ENCODE measurements at regions of chr1 and their contacts with region 1.

Region 1: DNA sequence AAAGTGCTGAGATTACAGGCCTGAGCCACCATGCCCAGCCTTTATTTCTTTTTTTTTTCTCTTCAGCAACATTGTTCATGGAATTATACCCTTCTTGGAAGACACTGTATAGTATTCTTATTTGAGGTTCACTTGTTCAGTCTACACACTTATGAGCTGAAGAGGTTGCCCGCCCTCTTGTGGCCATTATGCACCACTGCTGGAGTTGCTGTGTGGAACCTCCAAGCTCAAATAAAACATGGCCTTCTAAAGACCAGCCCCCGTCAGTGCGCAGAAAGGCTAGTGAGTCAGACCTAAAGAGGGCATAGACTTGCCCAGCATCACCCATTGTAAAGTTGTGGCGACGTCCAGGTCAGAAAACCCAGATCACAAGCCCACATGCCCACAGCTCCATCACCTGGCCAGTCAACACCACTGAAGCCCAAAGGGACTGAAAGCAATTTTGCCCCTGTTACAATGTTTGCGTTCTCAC is 20.4 kb downstream of the LURAP1 start:
- DNase-seq: peak; percentile 69
- H3K4me3 ChIP-seq: no peak overlapping the region
- CTCF ChIP-seq: peak; percentile 87

Region 2: GRCh38 chr1:46132529-46133180 is 90.9 kb before region 1 on chr1 and contains the start of gene PIK3R3:
- CTCF ChIA-PET with region 1: interaction called, 10 read pairs
- POLR2A ChIA-PET with region 1: interaction called, 3 read pairs
- DNase-seq: peak; percentile 93
- H3K4me3 ChIP-seq: peak within 1 kb of the TSS; percentile 83
- CTCF ChIP-seq: no peak

Region 3: DNA sequence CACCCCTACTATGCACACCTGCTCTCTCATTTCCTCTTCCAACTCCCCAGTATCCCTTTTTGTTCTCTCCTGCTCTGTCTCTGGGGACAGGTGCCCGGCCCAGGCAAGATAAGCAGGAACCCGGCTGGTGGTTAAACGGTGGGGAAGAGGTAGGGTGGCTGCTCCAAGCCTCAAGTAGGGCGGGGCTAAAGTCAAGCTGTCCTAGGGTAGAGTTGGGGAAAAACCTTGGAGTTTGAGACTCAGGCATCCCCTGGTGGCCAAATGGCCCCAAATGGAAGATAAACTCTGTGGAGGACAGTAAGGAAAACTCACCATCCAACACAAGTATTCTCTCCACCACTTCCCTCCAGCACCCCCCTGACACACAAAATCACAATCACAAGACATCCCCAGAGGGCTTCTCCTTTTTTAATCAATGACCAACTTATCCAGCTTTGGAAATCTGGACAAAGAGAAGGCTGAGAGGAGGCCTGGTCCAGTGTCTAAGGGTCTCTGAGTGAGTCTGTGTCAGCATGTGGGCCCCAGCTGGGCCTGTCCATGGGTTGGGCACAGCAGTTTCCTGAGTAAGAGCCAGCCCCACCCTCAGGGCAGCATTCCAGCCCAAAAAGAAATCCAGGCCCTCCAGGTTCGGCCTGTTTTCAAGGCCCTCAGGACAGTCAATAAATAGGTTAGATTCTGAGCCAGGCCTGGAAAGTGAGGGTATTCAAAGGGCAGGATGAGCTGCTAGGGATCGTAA is 35.0 kb before region 1 on chr1:
- CTCF ChIA-PET with region 1: interaction called, 100 read pairs
- POLR2A ChIA-PET with region 1: no interaction called
- DNase-seq: no peak
- H3K4me3 ChIP-seq: no peak overlapping the region
- CTCF ChIP-seq: no peak

Region 4: DNA sequence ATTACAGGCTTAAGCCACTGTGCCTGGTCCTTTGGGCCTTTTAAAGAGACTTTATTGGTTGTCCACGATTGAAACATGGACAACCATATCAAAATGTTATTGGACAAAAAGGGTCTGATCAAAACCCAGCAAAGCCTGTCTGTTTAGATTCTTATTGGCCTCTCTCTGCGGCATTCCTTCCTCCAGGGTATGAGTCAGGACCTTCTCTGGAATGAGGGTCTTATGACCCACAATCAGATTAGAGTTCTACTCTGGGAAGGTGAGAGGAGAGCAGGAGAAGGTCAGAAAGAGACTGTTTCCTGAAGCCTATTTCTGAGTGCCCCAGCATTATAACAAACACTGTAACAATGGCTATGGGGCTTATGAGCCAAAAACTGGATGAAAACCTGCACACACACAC is 12.5 kb before region 1 on chr1:
- CTCF ChIA-PET with region 1: interaction called, 102 read pairs
- POLR2A ChIA-PET with region 1: interaction called, 3 read pairs
- DNase-seq: no peak
- H3K4me3 ChIP-seq: no peak overlapping the region
- CTCF ChIP-seq: no peak

Region 5: GRCh38 chr1:46247436-46248121 is 24.1 kb after region 1 on chr1 and contains the start of gene RAD54L:
- CTCF ChIA-PET with region 1: interaction called, 58 read pairs
- POLR2A ChIA-PET with region 1: no interaction called
- DNase-seq: peak; percentile 95
- H3K4me3 ChIP-seq: peak within 1 kb of the TSS; percentile 94
- CTCF ChIP-seq: no peak

Region 6: GRCh38 chr1:46262508-46262907 is 39.0 kb after region 1 on chr1:
- CTCF ChIA-PET with region 1: no interaction called
- POLR2A ChIA-PET with region 1: no interaction called
- DNase-seq: no peak
- H3K4me3 ChIP-seq: no peak overlapping the region
- CTCF ChIP-seq: no peak